CD8-positive, alpha-beta T cell (primary cell): ENCODE measurements at regions of chr1 and their contacts with region 1.

Region 1: GRCh38 chr1:149962123-149962548 is 25.5 kb upstream of the MTMR11 start:
- DNase-seq: peak in 7 of 9 experiments; percentile 21 to 78 (median 42)
- ATAC-seq: peak; percentile 83
- H3K4me3 ChIP-seq: no peak overlapping the region
- H3K4me3 Mint-ChIP-seq: no peak overlapping the region
- H3K27ac ChIP-seq: no peak overlapping the region
- H3K27ac Mint-ChIP-seq: no peak overlapping the region
- H3K4me1 ChIP-seq: no peaks in the 10 kb centered on the region
- H3K4me1 Mint-ChIP-seq: peaks cover 9% of the 10 kb centered on the region
- H3K27me3 ChIP-seq: no peaks in the 10 kb centered on the region
- H3K27me3 Mint-ChIP-seq: no peaks in the 10 kb centered on the region
- CTCF ChIP-seq: peak; percentile 82

Region 2: DNA sequence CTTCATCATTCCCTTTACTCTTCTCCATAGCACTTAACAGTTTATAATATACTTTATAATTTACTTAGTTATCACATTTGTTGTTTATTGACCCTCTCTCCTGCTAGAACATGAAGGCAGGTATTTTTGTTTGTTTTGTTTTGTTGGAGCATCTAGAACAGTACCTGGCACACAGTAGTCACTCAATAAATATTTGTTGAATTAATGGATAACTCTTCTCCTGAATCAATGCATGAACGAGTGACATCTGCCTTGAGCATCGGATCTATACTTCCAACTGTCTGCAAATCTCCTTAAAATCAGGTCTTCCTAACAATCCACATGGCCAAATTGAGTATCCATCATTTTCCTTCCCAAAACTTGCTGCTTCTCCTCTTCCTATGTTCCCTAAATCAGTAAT is 10.4 kb after region 1 on chr1:
- CTCF ChIA-PET with region 1: interaction called, 27 read pairs
- POLR2A ChIA-PET with region 1: no interaction called
- intact Hi-C with region 1: no loop called
- DNase-seq: no peak
- ATAC-seq: no peak
- H3K4me3 ChIP-seq: no peak overlapping the region
- H3K4me3 Mint-ChIP-seq: no peak overlapping the region
- H3K27ac ChIP-seq: no peak overlapping the region
- H3K27ac Mint-ChIP-seq: no peak overlapping the region
- H3K4me1 ChIP-seq: no peaks in the 10 kb centered on the region
- H3K4me1 Mint-ChIP-seq: no peaks in the 10 kb centered on the region
- H3K27me3 ChIP-seq: no peaks in the 10 kb centered on the region
- H3K27me3 Mint-ChIP-seq: no peaks in the 10 kb centered on the region
- CTCF ChIP-seq: no peak

Region 3: DNA sequence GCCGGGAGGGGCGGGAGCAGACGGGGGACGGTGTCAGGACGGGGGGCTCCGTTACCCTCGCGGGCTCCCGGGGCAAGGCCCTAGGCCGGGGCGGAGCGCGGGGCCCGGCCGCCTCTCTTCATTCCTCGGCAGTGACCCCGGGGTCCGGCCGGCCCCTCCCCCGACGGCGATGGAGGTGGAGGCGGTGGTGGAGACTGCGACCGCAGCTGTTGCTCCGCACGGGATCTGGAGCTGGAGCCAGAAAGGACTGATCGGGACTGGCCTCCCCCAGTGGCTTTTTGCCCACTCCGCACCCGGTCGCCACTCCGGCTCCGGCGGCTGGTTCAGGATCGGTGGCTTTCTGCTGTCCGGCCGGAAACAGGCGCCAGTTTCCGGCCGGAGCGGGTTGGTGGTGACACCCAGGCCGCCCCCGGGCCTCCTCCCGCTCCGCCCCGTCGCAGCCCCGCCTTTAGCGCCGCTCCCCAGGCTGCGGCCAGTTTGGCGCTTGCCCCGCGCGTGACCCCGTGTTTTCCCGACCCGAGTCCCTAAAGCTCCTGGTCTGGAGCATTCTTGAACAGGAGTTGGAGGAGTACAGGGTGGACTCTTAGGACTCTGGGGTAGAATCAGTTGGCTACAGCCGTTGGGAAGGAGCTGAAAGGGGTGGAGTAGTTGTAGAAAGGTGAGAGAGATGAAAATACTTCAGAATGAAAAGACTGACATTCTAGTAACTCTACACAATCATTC is 48.4 kb after region 1 on chr1 and contains the start of gene OTUD7B:
- CTCF ChIA-PET with region 1: interaction called, 4 read pairs
- POLR2A ChIA-PET with region 1: no interaction called
- intact Hi-C with region 1: loop called in 1 of 2 experiments (anchors 5 kb)
- DNase-seq: peak; percentile 42 to 82 (median 65)
- ATAC-seq: peak; percentile 82
- H3K4me3 ChIP-seq: peak within 1 kb of the TSS; percentile 88 to 95
- H3K4me3 Mint-ChIP-seq: peak within 1 kb of the TSS; percentile 88
- H3K27ac ChIP-seq: peak within 1 kb of the TSS; percentile 59 to 67
- H3K27ac Mint-ChIP-seq: peak within 1 kb of the TSS; percentile 91
- H3K4me1 ChIP-seq: peaks cover 10% of the 10 kb centered on the region
- H3K4me1 Mint-ChIP-seq: peaks cover 29% of the 10 kb centered on the region
- H3K27me3 ChIP-seq: no peaks in the 10 kb centered on the region
- H3K27me3 Mint-ChIP-seq: no peaks in the 10 kb centered on the region
- CTCF ChIP-seq: no peak
- total RNA-seq, gene OTUD7B: 2.1 to 2.2 TPM

Region 4: DNA sequence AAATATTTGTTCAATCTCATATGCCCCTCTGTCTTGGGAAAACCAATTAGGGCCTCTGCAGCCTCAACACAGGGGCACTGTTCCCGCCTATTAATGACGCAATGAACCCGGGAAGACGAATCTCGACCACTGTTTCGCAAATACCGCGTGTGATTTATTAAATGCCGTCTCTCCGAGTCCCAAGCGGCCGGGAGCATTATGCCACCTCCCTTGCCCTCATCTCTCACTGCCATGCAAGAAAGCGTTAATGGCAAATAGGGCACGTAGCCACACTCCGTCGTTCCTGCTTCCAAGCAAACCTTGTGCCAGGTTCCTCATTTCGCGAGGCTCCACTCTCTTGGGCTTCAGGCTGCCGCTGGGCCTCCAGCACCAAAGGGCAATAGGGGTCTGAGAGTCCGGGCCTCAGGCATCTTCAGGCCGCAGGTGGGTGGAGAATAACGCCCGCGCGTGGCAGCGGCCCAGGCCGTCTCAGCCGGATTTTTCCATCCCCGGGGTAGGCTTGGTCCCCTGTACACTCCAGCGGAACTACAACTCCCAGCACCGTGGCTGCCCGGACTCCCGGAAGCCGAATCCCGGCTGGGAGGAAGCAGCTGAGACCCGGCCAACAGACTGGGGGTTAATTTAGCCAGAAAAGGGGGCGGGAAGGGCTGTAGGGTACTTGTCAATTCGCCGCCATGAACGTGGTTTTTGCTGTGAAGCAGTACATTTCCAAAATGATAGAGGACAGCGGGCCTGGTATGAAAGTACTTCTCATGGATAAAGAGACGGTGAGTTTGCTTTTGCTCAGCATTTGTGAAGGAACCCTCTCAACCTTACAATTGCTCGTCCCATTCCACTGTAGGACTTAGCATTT is 105.3 kb after region 1 on chr1 and contains the start of gene VPS45:
- CTCF ChIA-PET with region 1: interaction called, 4 read pairs
- POLR2A ChIA-PET with region 1: no interaction called
- intact Hi-C with region 1: loop called in 1 of 2 experiments (anchors 5 kb)
- DNase-seq: peak; percentile 46 to 89 (median 80)
- ATAC-seq: peak; percentile 90
- H3K4me3 ChIP-seq: peak within 1 kb of the TSS; percentile 72 to 79
- H3K4me3 Mint-ChIP-seq: peak within 1 kb of the TSS; percentile 94
- H3K27ac ChIP-seq: peak within 1 kb of the TSS; percentile 57 to 78
- H3K27ac Mint-ChIP-seq: peak within 1 kb of the TSS; percentile 94
- H3K4me1 ChIP-seq: peaks cover 9% of the 10 kb centered on the region
- H3K4me1 Mint-ChIP-seq: peaks cover 36% of the 10 kb centered on the region
- H3K27me3 ChIP-seq: no peaks in the 10 kb centered on the region
- H3K27me3 Mint-ChIP-seq: no peaks in the 10 kb centered on the region
- CTCF ChIP-seq: no peak
- total RNA-seq, gene VPS45: 5.9 to 6.9 TPM

Region 5: DNA sequence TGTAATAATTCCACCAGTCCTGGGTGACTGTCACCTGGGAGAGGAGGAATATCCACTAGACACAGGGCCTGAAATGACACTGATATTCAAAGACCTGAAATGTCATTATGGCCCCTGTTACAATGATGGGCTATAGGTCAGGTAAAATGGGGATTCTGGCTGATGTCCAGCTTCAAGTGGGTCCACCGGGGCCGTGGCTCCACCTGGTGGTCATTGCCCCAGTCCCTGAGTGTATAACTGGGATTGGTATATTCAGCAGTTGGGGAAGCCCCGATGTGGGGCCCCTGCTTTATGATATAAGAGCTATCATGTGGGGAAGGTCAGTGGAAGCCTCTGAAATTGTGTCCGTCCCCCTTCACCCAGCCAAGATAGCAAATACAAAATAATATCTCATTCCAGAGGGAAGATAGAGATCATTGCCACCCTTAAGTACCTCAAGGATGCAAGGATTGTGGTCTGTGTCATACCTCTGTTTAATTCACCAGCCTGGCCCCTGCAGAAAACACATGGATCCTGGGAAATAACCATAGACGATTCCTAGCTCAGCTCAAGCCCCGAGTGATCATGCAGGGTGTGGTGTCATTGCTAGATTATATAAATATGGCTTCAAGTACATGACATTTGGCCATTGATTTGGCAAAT is 206.9 kb after region 1 on chr1:
- CTCF ChIA-PET with region 1: interaction called, 18 read pairs
- POLR2A ChIA-PET with region 1: no interaction called
- intact Hi-C with region 1: loop called (anchors 1 to 5 kb)
- DNase-seq: peak in 8 of 9 experiments; percentile 34 to 73 (median 58)
- ATAC-seq: peak; percentile 56
- H3K4me3 ChIP-seq: no peak overlapping the region
- H3K4me3 Mint-ChIP-seq: no peak overlapping the region
- H3K27ac ChIP-seq: no peak overlapping the region
- H3K27ac Mint-ChIP-seq: no peak overlapping the region
- H3K4me1 ChIP-seq: no peaks in the 10 kb centered on the region
- H3K4me1 Mint-ChIP-seq: no peaks in the 10 kb centered on the region
- H3K27me3 ChIP-seq: no peaks in the 10 kb centered on the region
- H3K27me3 Mint-ChIP-seq: no peaks in the 10 kb centered on the region
- CTCF ChIP-seq: peak; percentile 61

Region 6: DNA sequence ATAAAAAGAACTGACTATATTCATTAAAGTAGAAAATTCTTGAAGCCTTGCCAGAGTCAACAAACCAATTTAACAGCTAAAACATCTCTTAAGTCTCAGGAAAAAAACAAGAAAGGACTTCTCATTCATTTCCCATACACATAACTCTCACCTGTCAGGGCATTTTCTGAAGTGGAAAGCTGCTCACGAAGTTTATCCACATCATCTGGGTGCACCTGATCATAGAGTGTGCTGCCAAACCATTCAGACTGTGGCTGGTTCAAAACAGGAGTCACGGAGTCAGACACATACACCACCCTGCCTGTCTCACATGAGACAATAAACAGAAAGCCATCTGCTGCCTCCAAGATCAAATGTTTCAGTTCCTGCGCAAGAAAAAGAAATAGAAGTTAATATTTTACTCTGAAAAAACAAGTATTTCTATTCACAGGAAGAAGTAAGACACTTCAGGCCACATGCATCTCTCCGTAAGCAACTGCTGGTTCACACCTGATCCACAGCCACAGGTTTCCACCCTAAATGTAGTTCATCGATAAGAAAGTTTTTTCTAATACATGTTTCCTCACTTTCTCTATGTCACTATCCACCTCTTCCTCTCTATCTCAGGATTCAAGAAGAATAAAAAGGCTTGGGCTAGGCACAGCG is 874.1 kb after region 1 on chr1:
- CTCF ChIA-PET with region 1: no interaction called
- POLR2A ChIA-PET with region 1: no interaction called
- intact Hi-C with region 1: no loop called
- DNase-seq: no peak
- ATAC-seq: no peak
- H3K4me3 ChIP-seq: no peak overlapping the region
- H3K4me3 Mint-ChIP-seq: no peak overlapping the region
- H3K27ac ChIP-seq: no peak overlapping the region
- H3K27ac Mint-ChIP-seq: no peak overlapping the region
- H3K4me1 ChIP-seq: peaks cover 8% of the 10 kb centered on the region
- H3K4me1 Mint-ChIP-seq: peaks cover 9% of the 10 kb centered on the region
- H3K27me3 ChIP-seq: no peaks in the 10 kb centered on the region
- H3K27me3 Mint-ChIP-seq: no peaks in the 10 kb centered on the region
- CTCF ChIP-seq: no peak

Region 7: GRCh38 chr1:150863724-150864123 is 901.6 kb after region 1 on chr1:
- CTCF ChIA-PET with region 1: no interaction called
- POLR2A ChIA-PET with region 1: no interaction called
- intact Hi-C with region 1: no loop called
- DNase-seq: no peak
- ATAC-seq: no peak
- H3K4me3 ChIP-seq: no peak overlapping the region
- H3K4me3 Mint-ChIP-seq: no peak overlapping the region
- H3K27ac ChIP-seq: no peak overlapping the region
- H3K27ac Mint-ChIP-seq: no peak overlapping the region
- H3K4me1 ChIP-seq: no peaks in the 10 kb centered on the region
- H3K4me1 Mint-ChIP-seq: peaks cover 37% of the 10 kb centered on the region
- H3K27me3 ChIP-seq: no peaks in the 10 kb centered on the region
- H3K27me3 Mint-ChIP-seq: no peaks in the 10 kb centered on the region
- CTCF ChIP-seq: no peak